HEK293 (cell line): ENCODE measurements at regions of chr13 and their contacts with region 1.

Region 1: GRCh38 chr13:101144808-101145419 is 271.4 kb downstream of the NALCN start:
- H3K4me3 ChIP-seq: no peak overlapping the region
- H3K27ac ChIP-seq: no peak overlapping the region
- H3K4me1 ChIP-seq: no peaks in the 10 kb centered on the region
- CTCF ChIP-seq: no peak

Region 2: GRCh38 chr13:101155920-101156319 is 11.0 kb after region 1 on chr13:
- CTCF ChIA-PET with region 1: interaction called, 30 read pairs
- POLR2A ChIA-PET with region 1: no interaction called
- H3K4me3 ChIP-seq: no peak overlapping the region
- H3K27ac ChIP-seq: no peak overlapping the region
- H3K4me1 ChIP-seq: no peaks in the 10 kb centered on the region
- CTCF ChIP-seq: no peak

Region 3: GRCh38 chr13:101474419-101474957 is 329.6 kb after region 1 on chr13:
- CTCF ChIA-PET with region 1: interaction called, 18 read pairs
- POLR2A ChIA-PET with region 1: no interaction called
- H3K4me3 ChIP-seq: no peak overlapping the region
- H3K27ac ChIP-seq: no peak overlapping the region
- H3K4me1 ChIP-seq: no peaks in the 10 kb centered on the region
- CTCF ChIP-seq: peak; percentile 47; the same call in 1 of the 2 replicates

Region 4: GRCh38 chr13:101919541-101920181 is 774.7 kb after region 1 on chr13:
- CTCF ChIA-PET with region 1: interaction called, 18 read pairs
- POLR2A ChIA-PET with region 1: no interaction called
- H3K4me3 ChIP-seq: peak overlapping the region; percentile 2
- H3K27ac ChIP-seq: no peak overlapping the region
- H3K4me1 ChIP-seq: no peaks in the 10 kb centered on the region
- CTCF ChIP-seq: no peak